Common myeloid progenitor, CD34-positive (primary cell): ENCODE measurements at regions of chr20 and their contacts with region 1.

Region 1: DNA sequence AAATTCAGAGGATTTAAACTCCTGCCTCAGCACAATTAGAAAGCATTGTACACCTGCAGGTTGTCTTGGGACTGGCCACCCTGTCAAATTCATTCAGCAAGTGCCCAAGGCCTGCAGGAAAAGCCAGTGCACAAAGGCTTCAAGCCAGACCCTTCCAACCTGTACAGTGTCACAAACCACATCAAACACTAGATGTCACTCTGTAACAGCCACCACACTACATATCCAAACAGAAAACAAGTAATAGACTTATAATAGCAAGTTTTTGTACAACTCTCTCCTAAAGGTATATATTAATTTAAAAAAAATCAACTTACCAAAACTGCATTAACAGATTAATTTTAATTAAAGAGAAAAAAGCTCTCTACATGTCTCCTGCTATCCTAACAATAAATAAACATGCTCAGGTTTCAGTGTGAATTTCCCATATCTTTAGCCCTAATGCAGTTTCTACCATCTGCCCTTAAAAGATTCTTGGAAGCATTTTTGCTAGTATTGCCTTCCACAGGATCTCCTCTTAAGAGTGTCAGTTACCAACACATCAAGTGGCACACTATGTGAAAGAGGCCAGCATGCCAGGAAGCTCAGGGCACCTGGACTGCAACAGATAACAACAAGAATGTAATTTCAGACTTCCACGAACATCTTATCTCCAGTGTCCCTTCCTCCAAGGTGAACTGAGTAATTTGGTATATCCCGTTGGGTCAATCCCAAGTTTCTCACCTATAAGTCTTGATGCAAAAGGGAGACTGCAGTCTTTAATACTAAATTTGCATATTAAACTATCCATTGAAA is 47.5 kb downstream of the RALGAPA2 start:
- DNase-seq: peak; percentile 64 to 76 (median 74)
- H3K4me3 ChIP-seq: no peak overlapping the region
- H3K27ac ChIP-seq: no peak overlapping the region
- H3K4me1 ChIP-seq: peaks cover 12 to 50% (median 25%) of the 10 kb centered on the region in 4 experiments
- H3K27me3 ChIP-seq: no peaks in the 10 kb centered on the region

Region 2: GRCh38 chr20:20649945-20650344 is 15.0 kb before region 1 on chr20:
- CTCF ChIA-PET with region 1: no interaction called
- POLR2A ChIA-PET with region 1: no interaction called
- DNase-seq: no peak
- H3K4me3 ChIP-seq: no peak overlapping the region
- H3K27ac ChIP-seq: no peak overlapping the region
- H3K4me1 ChIP-seq: no peaks in the 10 kb centered on the region
- H3K27me3 ChIP-seq: no peaks in the 10 kb centered on the region

Region 3: GRCh38 chr20:20680991-20681508 is 16.1 kb after region 1 on chr20:
- CTCF ChIA-PET with region 1: interaction called, 18 read pairs
- POLR2A ChIA-PET with region 1: no interaction called
- DNase-seq: peak in 2 of 3 donors; percentile 48 to 58
- H3K4me3 ChIP-seq: peak overlapping the region in 3 of 7 experiments; percentile 6 to 44 (median 43)
- H3K27ac ChIP-seq: no peak overlapping the region
- H3K4me1 ChIP-seq: peaks cover 28 to 55% (median 38%) of the 10 kb centered on the region in 4 experiments
- H3K27me3 ChIP-seq: no peaks in the 10 kb centered on the region